CD14-positive monocyte (primary cell): ENCODE measurements at regions of chr12 and their contacts with region 1.

Region 1: GRCh38 chr12:109093022-109093918 is at the start of gene ALKBH2:
- DNase-seq: peak; percentile 94 to 95 (median 95)
- H3K4me3 ChIP-seq: peak within 1 kb of the TSS; percentile 42 to 70 (median 46)
- H3K4me3 Mint-ChIP-seq: peak within 1 kb of the TSS; percentile 77 to 87
- H3K27ac ChIP-seq: peak within 1 kb of the TSS; percentile 13 to 68
- H3K27ac Mint-ChIP-seq: peak within 1 kb of the TSS; percentile 75 to 92 (median 86)
- H3K4me1 ChIP-seq: peaks cover 23 to 28% of the 10 kb centered on the region in 2 donors
- H3K4me1 Mint-ChIP-seq: peaks cover 22% of the 10 kb centered on the region
- H3K27me3 ChIP-seq: no peaks in the 10 kb centered on the region
- H3K27me3 Mint-ChIP-seq: peaks cover 0 to 2% (median 0%) of the 10 kb centered on the region in 3 donors
- CTCF ChIP-seq: peak; percentile 98
- polyA plus RNA-seq, gene ALKBH2: 3.7 to 13.0 (median 4.5) TPM

Region 2: GRCh38 chr12:108514973-108515814 is 578.1 kb before region 1 on chr12 and contains the start of gene FICD:
- intact Hi-C with region 1: loop called (anchors 10 kb)
- DNase-seq: peak; percentile 98
- H3K4me3 ChIP-seq: peak within 1 kb of the TSS; percentile 66 to 93 (median 85)
- H3K4me3 Mint-ChIP-seq: peak within 1 kb of the TSS; percentile 89 to 93
- H3K27ac ChIP-seq: peak within 1 kb of the TSS; percentile 49 to 87
- H3K27ac Mint-ChIP-seq: peak within 1 kb of the TSS; percentile 84 to 96 (median 93)
- H3K4me1 ChIP-seq: peaks cover 13 to 24% of the 10 kb centered on the region in 2 donors
- H3K4me1 Mint-ChIP-seq: peaks cover 24% of the 10 kb centered on the region
- H3K27me3 ChIP-seq: no peaks in the 10 kb centered on the region
- H3K27me3 Mint-ChIP-seq: peaks cover 9 to 14% (median 11%) of the 10 kb centered on the region in 3 donors
- CTCF ChIP-seq: no peak
- polyA plus RNA-seq, gene FICD: 1.00 to 1.9 (median 1.6) TPM

Region 3: DNA sequence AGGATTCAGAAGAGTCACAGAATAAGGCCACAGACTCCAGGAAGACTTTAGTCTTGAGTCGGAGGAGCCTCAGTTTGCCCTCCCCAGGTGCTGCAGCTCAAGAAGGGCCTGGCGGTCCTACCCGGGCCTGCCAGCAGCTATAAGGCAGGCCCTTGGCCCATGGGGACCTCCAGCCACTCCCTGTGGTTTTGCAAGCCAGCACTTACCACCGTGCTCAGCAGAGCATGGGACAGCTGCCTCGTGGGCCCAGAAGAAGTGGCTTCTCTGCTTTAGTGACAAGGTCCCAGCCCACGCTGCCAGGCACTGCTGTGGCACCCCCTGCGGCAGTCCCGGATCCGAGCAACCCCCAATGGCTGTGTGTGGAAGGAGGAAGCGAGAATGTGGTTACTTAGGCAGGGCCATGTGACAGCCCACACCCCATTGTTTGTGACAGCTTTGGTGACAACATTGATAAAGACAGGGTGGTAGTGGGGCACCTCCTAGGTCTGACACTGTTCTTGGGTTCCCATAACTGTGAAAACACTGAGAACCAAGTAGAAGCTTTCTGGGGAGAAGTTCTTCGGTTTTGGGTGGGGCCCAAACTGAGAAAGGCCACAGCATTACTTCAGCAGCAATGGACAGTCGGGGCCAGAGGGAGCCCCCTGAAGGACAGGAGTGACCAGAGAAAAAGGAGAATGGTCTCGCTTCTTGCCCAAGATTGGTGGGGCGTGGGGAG is 459.6 kb before region 1 on chr12 and contains the start of gene SELPLG:
- intact Hi-C with region 1: loop called in 1 of 2 experiments (anchors 10 kb)
- DNase-seq: peak; percentile 90 to 94 (median 92)
- H3K4me3 ChIP-seq: peak within 1 kb of the TSS; percentile 55 to 88 (median 83)
- H3K4me3 Mint-ChIP-seq: peak within 1 kb of the TSS; percentile 96 to 98
- H3K27ac ChIP-seq: peak within 1 kb of the TSS; percentile 98 to 99
- H3K27ac Mint-ChIP-seq: peak within 1 kb of the TSS; percentile 98 to 100 (median 100)
- H3K4me1 ChIP-seq: peaks cover 96% of the 10 kb centered on the region in 2 donors
- H3K4me1 Mint-ChIP-seq: peaks cover 90% of the 10 kb centered on the region
- H3K27me3 ChIP-seq: no peaks in the 10 kb centered on the region
- H3K27me3 Mint-ChIP-seq: no peaks in the 10 kb centered on the region
- CTCF ChIP-seq: peak; percentile 30
- polyA plus RNA-seq, gene SELPLG: 193 to 349 (median 247) TPM

Region 4: GRCh38 chr12:108856428-108857157 is 236.7 kb before region 1 on chr12:
- intact Hi-C with region 1: loop called in 1 of 2 experiments (anchors 10 kb)
- DNase-seq: peak; percentile 84 to 93 (median 90)
- H3K4me3 ChIP-seq: peak overlapping the region; percentile 79 to 89 (median 82)
- H3K4me3 Mint-ChIP-seq: peak overlapping the region; percentile 97 to 100
- H3K27ac ChIP-seq: peak overlapping the region; percentile 70 to 98
- H3K27ac Mint-ChIP-seq: peak overlapping the region; percentile 94 to 99 (median 98)
- H3K4me1 ChIP-seq: peaks cover 71 to 77% of the 10 kb centered on the region in 2 donors
- H3K4me1 Mint-ChIP-seq: peaks cover 74% of the 10 kb centered on the region
- H3K27me3 ChIP-seq: no peaks in the 10 kb centered on the region
- H3K27me3 Mint-ChIP-seq: peaks cover 0 to 2% (median 0%) of the 10 kb centered on the region in 3 donors
- CTCF ChIP-seq: no peak

Region 5: GRCh38 chr12:109052414-109053323 is 40.6 kb before region 1 on chr12 and contains the start of gene USP30:
- intact Hi-C with region 1: loop called (anchors 2 kb)
- DNase-seq: peak; percentile 81 to 88 (median 86)
- H3K4me3 ChIP-seq: peak within 1 kb of the TSS; percentile 70 to 94 (median 94)
- H3K4me3 Mint-ChIP-seq: peak within 1 kb of the TSS; percentile 89 to 92
- H3K27ac ChIP-seq: peak within 1 kb of the TSS; percentile 74 to 85
- H3K27ac Mint-ChIP-seq: peak within 1 kb of the TSS; percentile 69 to 97 (median 92)
- H3K4me1 ChIP-seq: peaks cover 18 to 21% of the 10 kb centered on the region in 2 donors
- H3K4me1 Mint-ChIP-seq: peaks cover 21% of the 10 kb centered on the region
- H3K27me3 ChIP-seq: no peaks in the 10 kb centered on the region
- H3K27me3 Mint-ChIP-seq: peaks cover 2 to 9% (median 6%) of the 10 kb centered on the region in 3 donors
- CTCF ChIP-seq: no peak
- polyA plus RNA-seq, gene USP30: 4.5 to 8.2 (median 6.8) TPM